ENCODE measurements at regions of chr3 and their contacts with region 1.

Region 1: GRCh38 chr3:189282741-189283140 is 111.0 kb downstream of the TPRG1 start:
- DNase-seq: no peak
- H3K4me3 Mint-ChIP-seq: no peak overlapping the region
- H3K27ac Mint-ChIP-seq: no peak overlapping the region
- H3K4me1 Mint-ChIP-seq: peaks cover 20% of the 10 kb centered on the region
- H3K27me3 Mint-ChIP-seq: no peaks in the 10 kb centered on the region

Region 2: DNA sequence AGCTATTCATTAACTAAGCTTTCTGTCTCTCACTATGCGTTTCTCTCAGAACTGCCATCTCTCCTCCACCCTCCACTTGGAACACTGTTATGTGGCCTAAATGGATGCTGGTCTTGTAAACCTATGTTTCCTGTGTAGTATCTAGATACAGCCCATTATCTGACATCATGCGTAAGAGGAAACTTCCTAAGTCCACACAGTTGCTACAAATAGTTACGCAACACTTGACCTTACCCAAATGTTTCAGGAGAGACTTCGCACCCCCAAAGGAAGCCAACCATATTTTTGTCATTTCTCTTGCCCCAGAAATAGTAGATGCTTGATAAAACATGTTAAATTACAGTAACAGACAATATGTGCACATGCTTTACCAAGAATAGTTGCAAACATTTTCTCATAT is 198.1 kb before region 1 on chr3:
- CTCF ChIA-PET with region 1: no interaction called
- POLR2A ChIA-PET with region 1: no interaction called
- intact Hi-C with region 1: no loop called
- DNase-seq: no peak
- H3K4me3 Mint-ChIP-seq: no peak overlapping the region
- H3K27ac Mint-ChIP-seq: no peak overlapping the region
- H3K4me1 Mint-ChIP-seq: no peaks in the 10 kb centered on the region
- H3K27me3 Mint-ChIP-seq: no peaks in the 10 kb centered on the region

Region 3: DNA sequence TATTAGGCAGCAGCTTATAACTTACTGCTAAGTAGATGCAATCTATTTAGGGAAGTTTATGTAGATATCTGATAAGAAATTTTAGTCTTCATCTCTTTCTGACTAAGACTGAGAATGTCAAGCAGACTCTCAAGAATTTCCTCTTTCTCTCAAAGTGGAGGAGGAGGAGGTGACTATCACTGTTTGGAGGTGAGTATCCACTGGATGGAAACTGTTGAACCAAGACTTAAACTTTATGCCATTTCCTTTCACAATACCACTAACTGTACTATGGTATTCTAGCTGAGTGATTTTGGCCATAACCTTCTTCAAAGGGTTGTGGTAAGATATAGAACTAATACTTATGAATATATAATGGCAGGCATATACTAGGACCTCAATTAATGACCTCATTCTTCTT is 46.4 kb before region 1 on chr3:
- CTCF ChIA-PET with region 1: no interaction called
- POLR2A ChIA-PET with region 1: no interaction called
- intact Hi-C with region 1: no loop called
- DNase-seq: no peak
- H3K4me3 Mint-ChIP-seq: no peak overlapping the region
- H3K27ac Mint-ChIP-seq: no peak overlapping the region
- H3K4me1 Mint-ChIP-seq: peaks cover 4% of the 10 kb centered on the region
- H3K27me3 Mint-ChIP-seq: peaks cover 2% of the 10 kb centered on the region

Region 4: GRCh38 chr3:189270248-189270832 is 12.4 kb before region 1 on chr3:
- CTCF ChIA-PET with region 1: interaction called, 13 read pairs
- POLR2A ChIA-PET with region 1: no interaction called
- intact Hi-C with region 1: no loop called
- DNase-seq: peak; percentile 58
- H3K4me3 Mint-ChIP-seq: no peak overlapping the region
- H3K27ac Mint-ChIP-seq: no peak overlapping the region
- H3K4me1 Mint-ChIP-seq: peaks cover 13% of the 10 kb centered on the region
- H3K27me3 Mint-ChIP-seq: no peaks in the 10 kb centered on the region

Region 5: GRCh38 chr3:189841473-189842210 is 558.9 kb after region 1 on chr3:
- CTCF ChIA-PET with region 1: no interaction called
- POLR2A ChIA-PET with region 1: no interaction called
- intact Hi-C with region 1: no loop called
- DNase-seq: no peak
- H3K4me3 Mint-ChIP-seq: no peak overlapping the region
- H3K27ac Mint-ChIP-seq: no peak overlapping the region
- H3K4me1 Mint-ChIP-seq: peaks cover 12% of the 10 kb centered on the region
- H3K27me3 Mint-ChIP-seq: peaks cover 3% of the 10 kb centered on the region

Measured in activated CD4-positive, alpha-beta memory T cell treated with anti-CD3 and anti-CD28 coated beads for 36 hours (primary cell).